IMR-90 (cell line): ENCODE measurements at regions of chr3 and their contacts with region 1.

Region 1: GRCh38 chr3:71734883-71735282 is 9.7 kb upstream of the EIF4E3 start:
- DNase-seq: no peak
- ATAC-seq: no peak
- H3K4me3 ChIP-seq: no peak overlapping the region
- H3K27ac ChIP-seq: no peak overlapping the region
- H3K4me1 ChIP-seq: no peaks in the 10 kb centered on the region
- H3K27me3 ChIP-seq: peaks cover 17% of the 10 kb centered on the region
- CTCF ChIP-seq: no peak
- POLR2A ChIP-seq: no peak
- RAD21 ChIP-seq: no peak

Region 2: GRCh38 chr3:71360764-71361163 is 374.1 kb before region 1 on chr3:
- CTCF ChIA-PET with region 1: no interaction called
- POLR2A ChIA-PET with region 1: no interaction called
- dilution Hi-C with region 1: no loop called
- in situ Hi-C with region 1: no loop called
- intact Hi-C with region 1: no loop called
- DNase-seq: no peak
- ATAC-seq: no peak
- H3K4me3 ChIP-seq: no peak overlapping the region
- H3K27ac ChIP-seq: no peak overlapping the region
- H3K4me1 ChIP-seq: no peaks in the 10 kb centered on the region
- H3K27me3 ChIP-seq: no peaks in the 10 kb centered on the region
- CTCF ChIP-seq: no peak
- POLR2A ChIP-seq: no peak
- RAD21 ChIP-seq: no peak

Region 3: GRCh38 chr3:71771884-71772283 is 37.0 kb after region 1 on chr3:
- CTCF ChIA-PET with region 1: no interaction called
- POLR2A ChIA-PET with region 1: no interaction called
- dilution Hi-C with region 1: no loop called
- in situ Hi-C with region 1: no loop called
- intact Hi-C with region 1: loop called (anchors 1 kb)
- DNase-seq: no peak
- ATAC-seq: no peak
- H3K4me3 ChIP-seq: no peak overlapping the region
- H3K27ac ChIP-seq: no peak overlapping the region
- H3K4me1 ChIP-seq: no peaks in the 10 kb centered on the region
- H3K27me3 ChIP-seq: peaks cover 14% of the 10 kb centered on the region
- CTCF ChIP-seq: no peak
- POLR2A ChIP-seq: no peak
- RAD21 ChIP-seq: no peak

Region 4: DNA sequence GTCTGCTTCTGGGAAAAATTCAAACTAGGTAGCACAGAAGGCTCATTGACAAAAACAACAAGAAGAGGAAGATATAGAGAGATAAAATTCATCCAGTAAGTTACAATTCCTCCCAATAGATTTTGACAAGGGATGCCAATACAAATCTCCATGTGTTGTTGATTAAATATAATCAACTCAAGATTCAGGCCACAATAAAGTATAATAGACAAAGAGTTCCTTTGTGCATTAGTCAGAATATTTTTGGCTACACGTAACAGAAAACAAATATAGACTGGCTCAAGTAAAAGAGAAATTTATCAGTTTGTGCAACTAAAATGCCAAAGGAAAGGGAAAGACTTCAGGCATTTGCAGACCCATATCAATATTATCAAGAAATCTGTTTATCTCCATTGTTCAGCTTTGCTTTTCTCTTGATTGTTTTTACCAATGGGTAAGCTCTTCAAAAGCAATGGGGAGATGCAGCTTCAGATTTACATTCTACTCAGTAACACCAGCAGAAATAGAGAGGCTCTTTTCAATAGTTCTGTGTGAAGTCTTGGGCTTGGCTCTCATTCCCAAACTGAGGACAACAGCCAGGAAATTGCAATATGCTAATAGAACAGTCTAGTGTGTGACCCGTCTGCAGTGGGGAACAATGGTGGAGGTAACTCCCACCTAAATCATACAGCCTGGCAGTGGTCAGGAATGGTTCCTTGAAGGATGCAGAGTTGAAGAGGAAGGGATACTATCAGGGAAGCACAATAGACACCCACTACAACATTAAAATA is 127.7 kb after region 1 on chr3:
- CTCF ChIA-PET with region 1: no interaction called
- POLR2A ChIA-PET with region 1: no interaction called
- dilution Hi-C with region 1: no loop called
- in situ Hi-C with region 1: no loop called
- intact Hi-C with region 1: loop called (anchors 10 kb)
- DNase-seq: no peak
- ATAC-seq: no peak
- H3K4me3 ChIP-seq: no peak overlapping the region
- H3K27ac ChIP-seq: no peak overlapping the region
- H3K4me1 ChIP-seq: no peaks in the 10 kb centered on the region
- H3K27me3 ChIP-seq: peaks cover 10% of the 10 kb centered on the region
- CTCF ChIP-seq: no peak
- POLR2A ChIP-seq: no peak
- RAD21 ChIP-seq: no peak